ENCODE measurements at regions of chr15 and their contacts with region 1.

Region 1: DNA sequence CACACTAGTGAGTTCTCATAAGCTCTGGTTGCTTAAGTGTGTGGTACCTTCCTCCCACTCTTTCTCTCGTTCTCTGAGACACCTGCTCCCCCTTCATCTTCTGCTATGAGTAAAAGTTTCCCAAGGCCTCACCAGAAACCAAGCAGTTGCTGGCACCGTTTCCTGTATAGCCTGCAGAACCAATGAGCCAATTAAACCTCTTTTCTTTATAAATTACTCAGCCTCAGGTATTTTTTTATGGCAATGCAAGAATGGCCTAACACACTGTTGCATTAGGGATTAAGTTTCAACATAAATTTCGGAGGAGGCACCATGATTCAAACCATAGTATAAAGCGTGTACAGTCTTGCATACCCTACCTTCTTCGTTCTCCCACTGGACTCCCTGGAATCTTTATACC is 252.3 kb upstream of the CHRM5 start:
- DNase-seq: peak; percentile 42
- ATAC-seq: peak; percentile 75
- H3K4me3 Mint-ChIP-seq: no peak overlapping the region
- H3K27ac Mint-ChIP-seq: no peak overlapping the region
- H3K4me1 Mint-ChIP-seq: peaks cover 7% of the 10 kb centered on the region
- H3K27me3 Mint-ChIP-seq: peaks cover 5% of the 10 kb centered on the region
- CTCF ChIP-seq: no peak

Region 2: GRCh38 chr15:33746203-33746602 is 30.2 kb after region 1 on chr15:
- CTCF ChIA-PET with region 1: no interaction called
- POLR2A ChIA-PET with region 1: no interaction called
- intact Hi-C with region 1: no loop called
- DNase-seq: no peak
- ATAC-seq: no peak
- H3K4me3 Mint-ChIP-seq: no peak overlapping the region
- H3K27ac Mint-ChIP-seq: no peak overlapping the region
- H3K4me1 Mint-ChIP-seq: no peaks in the 10 kb centered on the region
- H3K27me3 Mint-ChIP-seq: peaks cover 4% of the 10 kb centered on the region
- CTCF ChIP-seq: no peak

Region 3: DNA sequence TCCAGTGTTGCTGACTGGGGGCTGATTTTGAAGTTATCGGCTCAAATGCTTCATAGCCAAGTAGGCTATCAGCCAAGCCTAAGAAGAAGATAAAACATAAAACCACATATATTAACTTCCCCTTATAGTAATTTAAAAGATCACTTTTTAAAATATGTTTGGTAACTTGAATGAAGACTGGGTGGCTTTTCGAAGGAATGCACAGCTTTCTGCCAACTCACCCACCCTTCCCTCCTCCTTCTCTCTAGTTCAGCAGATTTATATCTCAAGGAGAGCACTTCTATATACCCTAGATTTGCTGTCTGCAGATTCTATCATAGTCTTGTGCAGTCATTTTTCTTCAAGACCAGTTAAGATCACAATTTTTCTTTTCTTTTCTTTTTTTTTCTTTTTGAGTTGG is 62.8 kb after region 1 on chr15:
- CTCF ChIA-PET with region 1: no interaction called
- POLR2A ChIA-PET with region 1: no interaction called
- intact Hi-C with region 1: loop called (anchors 10 kb)
- DNase-seq: no peak
- ATAC-seq: no peak
- H3K4me3 Mint-ChIP-seq: no peak overlapping the region
- H3K27ac Mint-ChIP-seq: no peak overlapping the region
- H3K4me1 Mint-ChIP-seq: no peaks in the 10 kb centered on the region
- H3K27me3 Mint-ChIP-seq: peaks cover 6% of the 10 kb centered on the region
- CTCF ChIP-seq: no peak

Region 4: GRCh38 chr15:34109797-34110663 is 394.0 kb after region 1 on chr15:
- CTCF ChIA-PET with region 1: no interaction called
- POLR2A ChIA-PET with region 1: no interaction called
- intact Hi-C with region 1: no loop called
- DNase-seq: peak; percentile 15
- ATAC-seq: no peak
- H3K4me3 Mint-ChIP-seq: no peak overlapping the region
- H3K27ac Mint-ChIP-seq: no peak overlapping the region
- H3K4me1 Mint-ChIP-seq: no peaks in the 10 kb centered on the region
- H3K27me3 Mint-ChIP-seq: no peaks in the 10 kb centered on the region
- CTCF ChIP-seq: peak; percentile 71

Measured in activated CD8-positive, alpha-beta T cell treated with anti-CD3 and anti-CD28 coated beads for 36 hours (primary cell).